ENCODE measurements at regions of chr1 and their contacts with region 1.

Region 1: DNA sequence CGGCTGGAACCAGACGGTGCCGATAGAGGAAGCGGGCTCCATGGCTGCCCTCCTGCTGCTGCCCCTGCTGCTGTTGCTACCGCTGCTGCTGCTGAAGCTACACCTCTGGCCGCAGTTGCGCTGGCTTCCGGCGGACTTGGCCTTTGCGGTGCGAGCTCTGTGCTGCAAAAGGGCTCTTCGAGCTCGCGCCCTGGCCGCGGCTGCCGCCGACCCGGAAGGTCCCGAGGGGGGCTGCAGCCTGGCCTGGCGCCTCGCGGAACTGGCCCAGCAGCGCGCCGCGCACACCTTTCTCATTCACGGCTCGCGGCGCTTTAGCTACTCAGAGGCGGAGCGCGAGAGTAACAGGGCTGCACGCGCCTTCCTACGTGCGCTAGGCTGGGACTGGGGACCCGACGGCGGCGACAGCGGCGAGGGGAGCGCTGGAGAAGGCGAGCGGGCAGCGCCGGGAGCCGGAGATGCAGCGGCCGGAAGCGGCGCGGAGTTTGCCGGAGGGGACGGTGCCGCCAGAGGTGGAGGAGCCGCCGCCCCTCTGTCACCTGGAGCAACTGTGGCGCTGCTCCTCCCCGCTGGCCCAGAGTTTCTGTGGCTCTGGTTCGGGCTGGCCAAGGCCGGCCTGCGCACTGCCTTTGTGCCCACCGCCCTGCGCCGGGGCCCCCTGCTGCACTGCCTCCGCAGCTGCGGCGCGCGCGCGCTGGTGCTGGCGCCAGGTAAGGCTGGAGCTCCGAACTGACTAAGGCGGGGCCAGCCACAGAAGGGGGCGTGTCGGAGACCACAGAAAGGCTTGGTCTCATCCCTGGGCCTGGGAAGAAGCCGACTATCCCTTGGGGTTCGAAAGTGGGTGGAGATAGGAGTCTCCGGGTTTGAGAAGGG is 486 bp downstream of the SLC27A3 start:
- DNase-seq: peak; percentile 56
- H3K4me3 Mint-ChIP-seq: peak overlapping the region; percentile 80
- H3K27ac Mint-ChIP-seq: peak overlapping the region; percentile 44
- H3K4me1 Mint-ChIP-seq: peaks cover 25% of the 10 kb centered on the region
- H3K27me3 Mint-ChIP-seq: no peaks in the 10 kb centered on the region

Region 2: DNA sequence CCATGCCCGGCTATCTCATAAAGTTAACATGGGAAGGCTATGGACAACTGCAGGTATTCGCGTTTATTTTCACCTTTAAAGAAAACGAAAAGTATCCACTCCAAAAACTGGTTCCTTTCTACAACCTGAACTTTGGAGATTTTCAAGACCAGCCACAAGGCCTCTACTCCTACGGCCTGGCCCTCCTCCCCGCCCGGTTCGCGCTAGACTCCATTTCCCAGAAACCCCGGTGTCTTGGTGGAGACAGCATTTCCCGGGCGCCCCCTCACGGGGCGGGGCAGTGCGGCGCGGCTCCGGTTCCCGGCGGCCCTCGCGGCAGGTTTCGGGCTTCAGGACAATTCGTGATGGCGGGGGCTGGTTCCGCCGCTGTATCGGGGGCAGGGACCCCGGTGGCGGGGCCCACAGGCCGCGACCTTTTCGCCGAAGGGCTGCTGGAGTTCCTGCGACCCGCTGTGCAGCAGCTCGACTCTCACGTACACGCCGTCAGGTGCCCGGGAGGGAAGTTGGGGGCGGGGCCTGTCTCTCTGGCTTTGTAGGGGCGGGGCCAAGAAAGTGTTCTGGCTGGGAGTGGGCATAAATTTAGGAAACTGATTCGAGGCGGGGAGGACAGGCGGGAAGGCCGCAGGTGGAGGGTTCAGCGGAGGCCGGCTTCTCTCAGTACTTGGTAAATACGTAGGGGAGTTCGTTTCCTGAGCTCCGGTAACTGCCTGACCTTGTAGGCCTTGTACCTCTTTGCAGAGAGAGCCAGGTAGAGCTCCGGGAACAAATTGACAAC is 117.1 kb before region 1 on chr1 and contains the start of gene SNAPIN:
- intact Hi-C with region 1: no loop called
- DNase-seq: peak; percentile 90
- H3K4me3 Mint-ChIP-seq: peak within 1 kb of the TSS; percentile 96
- H3K27ac Mint-ChIP-seq: peak within 1 kb of the TSS; percentile 84
- H3K4me1 Mint-ChIP-seq: peaks cover 11% of the 10 kb centered on the region
- H3K27me3 Mint-ChIP-seq: no peaks in the 10 kb centered on the region
- total RNA-seq, gene SNAPIN: 31.1 and 35.4 TPM in 2 replicates

Region 3: DNA sequence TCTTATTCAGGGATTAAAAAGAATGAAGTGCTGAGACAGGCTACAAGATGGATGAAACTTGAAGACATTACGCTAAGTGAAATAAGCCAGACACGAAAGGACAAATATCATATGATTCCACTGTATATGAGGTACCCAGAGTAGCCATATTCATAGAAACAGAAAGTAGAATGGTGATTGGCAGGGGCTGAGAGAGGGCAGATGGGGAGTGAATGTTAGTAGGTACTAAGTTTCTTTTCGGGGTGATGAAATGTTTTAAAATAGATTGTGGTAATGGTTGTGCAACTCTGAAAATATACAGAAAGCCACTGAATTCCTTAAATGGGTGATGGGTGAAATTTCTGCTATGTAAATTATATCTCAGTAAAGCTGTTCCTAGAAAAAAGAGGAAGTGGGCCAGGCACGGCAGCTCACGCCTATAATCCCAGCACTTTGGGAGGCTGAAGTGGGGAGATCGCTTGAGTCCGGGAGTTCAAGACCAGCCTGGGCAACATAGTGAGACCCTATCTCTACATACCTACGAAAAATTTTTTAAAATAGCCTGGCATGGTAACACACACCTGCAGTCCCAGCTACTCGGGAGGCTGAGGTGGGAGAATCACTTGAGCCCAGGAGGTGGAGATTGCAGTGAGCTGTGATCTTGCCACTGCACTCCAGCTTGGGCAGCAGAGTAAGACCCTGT is 15.4 kb after region 1 on chr1:
- intact Hi-C with region 1: loop called (anchors 2 kb)
- DNase-seq: peak; percentile 19
- H3K4me3 Mint-ChIP-seq: peak overlapping the region; percentile 5
- H3K27ac Mint-ChIP-seq: peak overlapping the region; percentile 69
- H3K4me1 Mint-ChIP-seq: peaks cover 32% of the 10 kb centered on the region
- H3K27me3 Mint-ChIP-seq: peaks cover 16% of the 10 kb centered on the region

Region 4: GRCh38 chr1:153816283-153816889 is 40.7 kb after region 1 on chr1:
- intact Hi-C with region 1: no loop called
- DNase-seq: no peak
- H3K4me3 Mint-ChIP-seq: no peak overlapping the region
- H3K27ac Mint-ChIP-seq: no peak overlapping the region
- H3K4me1 Mint-ChIP-seq: no peaks in the 10 kb centered on the region
- H3K27me3 Mint-ChIP-seq: no peaks in the 10 kb centered on the region

Region 5: GRCh38 chr1:153977250-153978240 is 201.9 kb after region 1 on chr1 and contains the start of gene JTB:
- intact Hi-C with region 1: no loop called
- DNase-seq: peak; percentile 80
- H3K4me3 Mint-ChIP-seq: peak within 1 kb of the TSS; percentile 94
- H3K27ac Mint-ChIP-seq: peak within 1 kb of the TSS; percentile 95
- H3K4me1 Mint-ChIP-seq: peaks cover 33% of the 10 kb centered on the region
- H3K27me3 Mint-ChIP-seq: no peaks in the 10 kb centered on the region
- total RNA-seq, gene JTB: 198 and 213 TPM in 2 replicates